Right ventricle myocardium inferior (tissue), 1 donor: ENCODE measurements at regions of chr10 and their contacts with region 1.

Region 1: GRCh38 chr10:69639291-69640195 is 9.5 kb downstream of the FAM241B start:
- DNase-seq: no peak
- ATAC-seq: no peak

Region 2: GRCh38 chr10:68096913-68097503 is 1542.5 kb before region 1 on chr10:
- intact Hi-C with region 1: no loop called
- DNase-seq: no peak
- ATAC-seq: peak; percentile 68

Region 3: GRCh38 chr10:69413221-69413865 is 226.2 kb before region 1 on chr10:
- intact Hi-C with region 1: loop called (anchors 5 kb)
- DNase-seq: peak; percentile 79
- ATAC-seq: peak; percentile 38

Region 4: GRCh38 chr10:69425511-69426298 is 213.8 kb before region 1 on chr10:
- intact Hi-C with region 1: loop called (anchors 5 kb)
- DNase-seq: no peak
- ATAC-seq: no peak

Region 5: DNA sequence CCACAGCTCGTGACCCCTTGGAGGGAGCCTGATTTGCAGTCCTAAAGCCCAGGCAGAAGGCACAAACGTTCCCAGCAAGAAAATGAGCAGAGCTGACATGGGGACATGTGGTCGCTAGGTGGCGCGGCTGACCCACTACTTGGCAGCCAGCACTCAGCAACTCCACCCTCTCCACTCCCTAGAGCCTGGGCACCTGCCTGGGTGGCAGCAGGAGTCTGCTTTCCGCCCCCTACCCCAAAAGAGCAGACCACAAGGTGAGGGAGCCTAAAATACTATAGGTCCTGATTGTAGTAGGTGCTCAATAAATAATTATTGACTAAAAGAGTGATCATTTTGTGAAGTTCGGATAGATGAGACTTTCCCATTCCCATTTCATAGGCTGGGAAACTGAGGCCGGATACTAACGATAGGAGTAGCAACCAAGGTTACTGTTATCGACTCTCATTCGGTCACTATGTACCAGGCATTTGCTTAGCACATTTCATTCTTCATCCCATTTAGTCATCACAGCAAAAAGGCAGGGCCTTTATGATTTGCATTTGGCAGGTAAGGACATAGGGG is 123.8 kb before region 1 on chr10:
- intact Hi-C with region 1: loop called (anchors 1 kb)
- DNase-seq: peak; percentile 85
- ATAC-seq: peak; percentile 57